ENCODE measurements at regions of chr5 and their contacts with region 1.

Region 1: DNA sequence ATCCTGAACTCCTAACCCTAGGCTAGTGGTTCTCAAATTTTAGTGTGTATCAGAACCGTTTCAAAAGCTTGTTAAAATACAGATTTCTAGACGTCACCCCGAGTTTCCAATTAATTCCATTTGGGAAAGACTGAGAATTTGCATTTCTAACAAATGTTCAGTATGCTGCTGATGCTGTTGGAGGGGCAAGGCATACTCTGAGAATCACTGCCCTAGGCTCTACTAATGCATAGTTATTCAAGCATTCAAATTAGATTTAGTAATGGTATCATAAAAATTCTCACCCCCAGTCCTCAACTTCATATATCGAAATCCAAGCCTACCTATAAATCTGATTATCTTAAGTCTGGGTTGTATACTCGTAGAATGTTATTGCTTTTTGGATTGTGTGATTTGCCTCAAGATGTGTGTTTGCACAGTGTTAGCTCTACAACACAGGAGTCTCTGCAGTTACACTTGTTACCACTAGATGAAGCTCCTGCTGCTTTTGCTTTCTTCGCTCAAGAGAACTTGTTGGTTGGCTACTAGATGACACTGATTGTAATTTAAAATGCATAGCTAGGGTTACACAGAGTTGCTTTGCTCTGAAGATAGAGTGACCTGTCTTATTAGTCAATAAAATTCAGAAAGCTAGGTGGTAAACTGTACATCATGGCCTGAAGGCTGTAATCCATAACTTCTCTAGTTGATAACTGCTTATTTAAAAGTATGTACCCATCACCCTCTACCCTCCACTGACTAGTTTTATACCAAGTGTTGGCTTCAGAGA is 7.5 kb upstream of the ERAP2 start:
- DNase-seq: peak; percentile 66
- H3K4me3 ChIP-seq: no peak overlapping the region
- H3K27ac ChIP-seq: no peak overlapping the region
- H3K4me1 ChIP-seq: no peaks in the 10 kb centered on the region
- H3K27me3 ChIP-seq: no peaks in the 10 kb centered on the region
- CTCF ChIP-seq: peak; percentile 75 to 96 (median 81)
- EP300 ChIP-seq: no peak
- POLR2A ChIP-seq: no peak

Region 2: GRCh38 chr5:96752341-96753016 is 116.3 kb before region 1 on chr5:
- intact Hi-C with region 1: no loop called
- DNase-seq: no peak
- H3K4me3 ChIP-seq: no peak overlapping the region
- H3K27ac ChIP-seq: peak overlapping the region in 3 of 4 donors; percentile 19 to 40 (median 30)
- H3K4me1 ChIP-seq: peaks cover 6 to 19% (median 15%) of the 10 kb centered on the region in 4 donors
- H3K27me3 ChIP-seq: no peaks in the 10 kb centered on the region
- CTCF ChIP-seq: peak; percentile 52 to 72 (median 69)
- EP300 ChIP-seq: no peak
- POLR2A ChIP-seq: no peak

Region 3: GRCh38 chr5:96997265-96997859 is 128.6 kb after region 1 on chr5:
- intact Hi-C with region 1: loop called (anchors 10 kb)
- DNase-seq: no peak
- H3K4me3 ChIP-seq: no peak overlapping the region
- H3K27ac ChIP-seq: no peak overlapping the region
- H3K4me1 ChIP-seq: no peaks in the 10 kb centered on the region
- H3K27me3 ChIP-seq: no peaks in the 10 kb centered on the region
- CTCF ChIP-seq: peak in 2 of 3 experiments; percentile 32 to 49
- EP300 ChIP-seq: no peak
- POLR2A ChIP-seq: no peak